Activated CD4-positive, alpha-beta T cell treated with anti-CD3 and anti-CD28 coated beads for 36 hours (primary cell): ENCODE measurements at regions of chr12 and their contacts with region 1.

Region 1: GRCh38 chr12:54337280-54337842 is 12.4 kb downstream of the COPZ1 start:
- DNase-seq: no peak
- ATAC-seq: no peak
- H3K4me3 Mint-ChIP-seq: no peak overlapping the region
- H3K27ac Mint-ChIP-seq: no peak overlapping the region
- H3K4me1 Mint-ChIP-seq: peaks cover 13% of the 10 kb centered on the region
- H3K27me3 Mint-ChIP-seq: no peaks in the 10 kb centered on the region

Region 2: DNA sequence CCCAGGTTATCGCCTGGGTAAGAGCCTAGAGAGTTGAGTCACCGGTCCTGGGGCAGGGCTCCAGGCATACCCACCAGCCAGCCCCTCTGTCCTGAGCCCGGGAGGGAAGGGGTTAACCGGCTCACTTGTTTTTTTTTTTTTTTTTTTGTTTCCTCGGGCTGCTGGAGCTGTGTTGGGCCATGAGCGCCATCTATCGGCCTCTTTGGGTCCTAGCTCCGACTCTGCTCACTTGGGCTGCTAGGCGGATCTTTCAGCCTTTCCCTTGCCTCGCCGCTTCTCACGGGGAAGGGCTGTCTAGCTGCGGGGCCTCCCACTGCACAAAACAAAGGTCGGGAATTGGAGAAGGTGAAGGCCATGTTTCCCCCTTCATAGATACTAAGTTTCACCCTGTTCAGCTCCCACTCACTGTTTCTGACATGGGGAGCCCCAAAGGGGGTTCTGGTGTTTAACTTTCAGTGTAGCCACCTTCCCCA is 145.8 kb before region 1 on chr12:
- CTCF ChIA-PET with region 1: no interaction called
- POLR2A ChIA-PET with region 1: no interaction called
- intact Hi-C with region 1: no loop called
- DNase-seq: peak; percentile 87
- ATAC-seq: peak; percentile 60
- H3K4me3 Mint-ChIP-seq: no peak overlapping the region
- H3K27ac Mint-ChIP-seq: no peak overlapping the region
- H3K4me1 Mint-ChIP-seq: peaks cover 17% of the 10 kb centered on the region
- H3K27me3 Mint-ChIP-seq: peaks cover 35% of the 10 kb centered on the region

Region 3: GRCh38 chr12:54294152-54294952 is 43.0 kb before region 1 on chr12:
- CTCF ChIA-PET with region 1: interaction called, 30 read pairs
- POLR2A ChIA-PET with region 1: no interaction called
- intact Hi-C with region 1: no loop called
- DNase-seq: peak; percentile 83
- ATAC-seq: peak; percentile 82
- H3K4me3 Mint-ChIP-seq: no peak overlapping the region
- H3K27ac Mint-ChIP-seq: no peak overlapping the region
- H3K4me1 Mint-ChIP-seq: peaks cover 5% of the 10 kb centered on the region
- H3K27me3 Mint-ChIP-seq: peaks cover 10% of the 10 kb centered on the region

Region 4: GRCh38 chr12:54300732-54301427 is 36.5 kb before region 1 on chr12 and contains the start of gene NFE2:
- CTCF ChIA-PET with region 1: interaction called, 30 read pairs
- POLR2A ChIA-PET with region 1: no interaction called
- intact Hi-C with region 1: no loop called
- DNase-seq: peak; percentile 58
- ATAC-seq: peak; percentile 62
- H3K4me3 Mint-ChIP-seq: no peak within 1 kb of the TSS
- H3K27ac Mint-ChIP-seq: no peak within 1 kb of the TSS
- H3K4me1 Mint-ChIP-seq: peaks cover 13% of the 10 kb centered on the region
- H3K27me3 Mint-ChIP-seq: peaks cover 54% of the 10 kb centered on the region
- total RNA-seq, gene NFE2: not detected

Region 5: GRCh38 chr12:54352022-54352531 is 14.7 kb after region 1 on chr12:
- CTCF ChIA-PET with region 1: interaction called, 85 read pairs
- POLR2A ChIA-PET with region 1: no interaction called
- intact Hi-C with region 1: no loop called
- DNase-seq: peak; percentile 75
- ATAC-seq: peak; percentile 91
- H3K4me3 Mint-ChIP-seq: peak overlapping the region; percentile 55
- H3K27ac Mint-ChIP-seq: peak overlapping the region; percentile 48
- H3K4me1 Mint-ChIP-seq: peaks cover 22% of the 10 kb centered on the region
- H3K27me3 Mint-ChIP-seq: no peaks in the 10 kb centered on the region